Cardiac septum (tissue), 1 donor: ENCODE measurements at regions of chr12 and their contacts with region 1.

Region 1: GRCh38 chr12:27940756-27941402 is 31.7 kb downstream of the PTHLH start:
- DNase-seq: peak; percentile 79

Region 2: GRCh38 chr12:27998658-27999057 is 57.8 kb after region 1 on chr12:
- intact Hi-C with region 1: no loop called
- DNase-seq: no peak

Region 3: GRCh38 chr12:28872654-28873268 is 931.9 kb after region 1 on chr12:
- intact Hi-C with region 1: loop called (anchors 10 kb)
- DNase-seq: no peak